CD4-positive, alpha-beta memory T cell (primary cell): ENCODE measurements at regions of chr10 and their contacts with region 1.

Region 1: GRCh38 chr10:6033954-6034353 is 28.2 kb downstream of the IL2RA start:
- DNase-seq: no peak
- H3K4me3 ChIP-seq: no peak overlapping the region
- H3K4me3 Mint-ChIP-seq: no peak overlapping the region
- H3K27ac ChIP-seq: no peak overlapping the region
- H3K27ac Mint-ChIP-seq: peak overlapping the region in 5 of 7 donors; percentile 37 to 82 (median 60)
- H3K4me1 ChIP-seq: peaks cover 61% of the 10 kb centered on the region
- H3K4me1 Mint-ChIP-seq: peaks cover 28 to 78% (median 57%) of the 10 kb centered on the region in 4 donors
- H3K27me3 ChIP-seq: no peaks in the 10 kb centered on the region
- H3K27me3 Mint-ChIP-seq: no peaks in the 10 kb centered on the region

Region 2: DNA sequence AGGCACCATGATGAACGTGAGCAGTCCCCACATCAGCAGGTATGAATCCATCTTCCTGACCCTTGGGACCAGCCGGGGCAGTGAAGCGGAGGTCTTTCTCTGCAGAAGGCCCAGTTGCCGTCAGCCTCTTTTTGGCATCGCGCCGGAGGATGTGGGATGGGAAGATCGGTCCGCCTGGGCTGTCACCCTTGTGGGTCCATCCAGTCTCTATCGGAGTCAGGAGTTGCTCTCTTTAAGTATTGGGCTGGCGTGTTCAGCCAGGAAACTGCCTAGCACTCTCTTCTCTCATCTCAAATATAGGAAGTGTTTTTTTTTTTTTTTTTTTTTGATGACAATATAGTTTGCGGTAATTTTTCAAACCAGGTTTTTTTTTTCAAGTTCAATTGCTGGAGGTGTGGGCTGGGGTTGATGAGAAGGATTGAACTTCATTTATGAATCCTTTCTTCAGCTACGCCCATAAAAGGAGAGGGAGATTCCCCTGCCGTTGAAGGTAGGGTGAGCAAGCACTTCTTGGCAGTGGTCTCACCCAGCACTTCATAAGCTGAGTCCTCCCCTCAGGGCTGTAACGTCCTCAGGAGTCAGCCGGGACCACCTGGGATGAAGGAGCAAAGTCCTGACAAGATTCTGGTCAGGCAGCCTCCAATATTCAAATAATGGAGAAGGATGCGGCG is 28.3 kb after region 1 on chr10 and contains the start of gene IL2RA:
- CTCF ChIA-PET with region 1: interaction called, 4 read pairs
- POLR2A ChIA-PET with region 1: interaction called, 11 read pairs
- intact Hi-C with region 1: no loop called
- DNase-seq: peak; percentile 69 to 86 (median 75)
- H3K4me3 ChIP-seq: peak within 1 kb of the TSS; percentile 71 to 89
- H3K4me3 Mint-ChIP-seq: peak within 1 kb of the TSS; percentile 97 to 99 (median 98)
- H3K27ac ChIP-seq: peak within 1 kb of the TSS; percentile 83
- H3K27ac Mint-ChIP-seq: peak within 1 kb of the TSS; percentile 95 to 98 (median 96)
- H3K4me1 ChIP-seq: peaks cover 80% of the 10 kb centered on the region
- H3K4me1 Mint-ChIP-seq: peaks cover 44 to 88% (median 65%) of the 10 kb centered on the region in 4 donors
- H3K27me3 ChIP-seq: no peaks in the 10 kb centered on the region
- H3K27me3 Mint-ChIP-seq: no peaks in the 10 kb centered on the region
- total RNA-seq, gene IL2RA: 15.1 to 17.1 TPM

Region 3: GRCh38 chr10:6083523-6084475 is 49.8 kb after region 1 on chr10:
- CTCF ChIA-PET with region 1: interaction called, 49 read pairs
- POLR2A ChIA-PET with region 1: interaction called, 15 read pairs
- intact Hi-C with region 1: loop called (anchors 1 kb)
- DNase-seq: peak; percentile 47 to 72 (median 61)
- H3K4me3 ChIP-seq: peak overlapping the region in 1 of 2 donors; percentile 28
- H3K4me3 Mint-ChIP-seq: peak overlapping the region; percentile 51 to 84 (median 76)
- H3K27ac ChIP-seq: no peak overlapping the region
- H3K27ac Mint-ChIP-seq: peak overlapping the region; percentile 21 to 88 (median 74)
- H3K4me1 ChIP-seq: peaks cover 38% of the 10 kb centered on the region
- H3K4me1 Mint-ChIP-seq: peaks cover 31 to 61% (median 42%) of the 10 kb centered on the region in 4 donors
- H3K27me3 ChIP-seq: no peaks in the 10 kb centered on the region
- H3K27me3 Mint-ChIP-seq: no peaks in the 10 kb centered on the region

Region 4: DNA sequence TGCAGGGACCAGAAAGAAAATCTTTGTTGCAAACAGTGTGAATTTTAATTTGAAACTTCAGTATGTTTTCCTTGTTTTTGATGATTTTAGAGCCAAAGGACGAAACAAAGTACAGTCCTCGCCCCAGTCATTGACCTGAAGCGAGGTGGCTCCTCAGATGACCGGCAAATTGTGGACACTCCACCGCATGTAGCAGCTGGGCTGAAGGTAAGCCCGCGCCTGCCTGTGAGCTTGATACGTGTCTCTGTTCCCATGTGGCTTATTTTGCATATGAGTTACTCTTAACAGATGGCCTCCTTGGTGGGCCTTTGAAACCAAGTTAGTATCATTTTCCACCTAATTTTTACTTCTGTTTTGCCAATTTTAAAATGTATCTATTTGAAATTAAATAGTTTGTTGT is 67.2 kb after region 1 on chr10:
- CTCF ChIA-PET with region 1: no interaction called
- POLR2A ChIA-PET with region 1: no interaction called
- intact Hi-C with region 1: no loop called
- DNase-seq: no peak
- H3K4me3 ChIP-seq: no peak overlapping the region
- H3K4me3 Mint-ChIP-seq: no peak overlapping the region
- H3K27ac ChIP-seq: no peak overlapping the region
- H3K27ac Mint-ChIP-seq: peak overlapping the region in 2 of 7 donors; percentile 38 to 57
- H3K4me1 ChIP-seq: peaks cover 2% of the 10 kb centered on the region
- H3K4me1 Mint-ChIP-seq: peaks cover 14 to 31% (median 17%) of the 10 kb centered on the region in 4 donors
- H3K27me3 ChIP-seq: no peaks in the 10 kb centered on the region
- H3K27me3 Mint-ChIP-seq: no peaks in the 10 kb centered on the region

Region 5: GRCh38 chr10:6151087-6151977 is 117.4 kb after region 1 on chr10:
- CTCF ChIA-PET with region 1: no interaction called
- POLR2A ChIA-PET with region 1: no interaction called
- intact Hi-C with region 1: no loop called
- DNase-seq: peak in 4 of 5 donors; percentile 46 to 64 (median 56)
- H3K4me3 ChIP-seq: no peak overlapping the region
- H3K4me3 Mint-ChIP-seq: peak overlapping the region in 7 of 8 donors; percentile 36 to 75 (median 58)
- H3K27ac ChIP-seq: peak overlapping the region; percentile 1
- H3K27ac Mint-ChIP-seq: peak overlapping the region; percentile 86 to 93 (median 91)
- H3K4me1 ChIP-seq: peaks cover 47% of the 10 kb centered on the region
- H3K4me1 Mint-ChIP-seq: peaks cover 36 to 81% (median 49%) of the 10 kb centered on the region in 4 donors
- H3K27me3 ChIP-seq: no peaks in the 10 kb centered on the region
- H3K27me3 Mint-ChIP-seq: no peaks in the 10 kb centered on the region